ENCODE measurements at regions of chr11 and their contacts with region 1.

Region 1: DNA sequence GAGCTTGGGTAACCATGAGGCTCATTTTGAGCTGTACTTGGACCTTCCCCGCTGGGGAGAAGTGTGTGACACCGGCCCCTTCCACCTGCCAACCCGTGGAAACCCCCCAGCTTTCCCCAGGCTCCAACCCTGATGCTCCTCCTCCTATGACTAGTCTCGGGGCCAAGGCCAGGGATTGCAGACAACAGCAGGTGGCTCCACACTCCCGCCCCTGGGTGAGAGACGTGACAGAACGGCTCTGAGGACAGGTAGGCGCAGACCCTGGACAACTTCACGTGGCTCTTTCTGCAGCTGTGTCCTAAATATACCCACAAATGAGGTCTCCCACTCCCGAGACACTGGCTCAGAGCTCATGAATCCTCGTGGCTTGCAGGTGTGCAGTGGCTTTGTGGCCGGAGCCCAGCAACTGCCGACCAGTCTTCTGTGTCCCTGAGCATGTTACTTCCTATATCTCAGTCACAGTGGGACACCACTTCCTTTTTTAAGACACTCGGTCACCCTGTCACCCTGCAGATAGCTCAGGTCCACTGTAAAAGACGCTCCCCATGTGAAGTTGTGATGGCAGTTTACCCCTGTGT is 55.2 kb downstream of the NECTIN1 start:
- DNase-seq: no peak
- ATAC-seq: peak in 3 of 4 donors; percentile 57 to 78 (median 73)
- H3K4me3 ChIP-seq: no peak overlapping the region
- H3K27ac ChIP-seq: no peak overlapping the region
- H3K4me1 ChIP-seq: no peaks in the 10 kb centered on the region
- H3K27me3 ChIP-seq: no peaks in the 10 kb centered on the region
- CTCF ChIP-seq: no peak

Region 2: DNA sequence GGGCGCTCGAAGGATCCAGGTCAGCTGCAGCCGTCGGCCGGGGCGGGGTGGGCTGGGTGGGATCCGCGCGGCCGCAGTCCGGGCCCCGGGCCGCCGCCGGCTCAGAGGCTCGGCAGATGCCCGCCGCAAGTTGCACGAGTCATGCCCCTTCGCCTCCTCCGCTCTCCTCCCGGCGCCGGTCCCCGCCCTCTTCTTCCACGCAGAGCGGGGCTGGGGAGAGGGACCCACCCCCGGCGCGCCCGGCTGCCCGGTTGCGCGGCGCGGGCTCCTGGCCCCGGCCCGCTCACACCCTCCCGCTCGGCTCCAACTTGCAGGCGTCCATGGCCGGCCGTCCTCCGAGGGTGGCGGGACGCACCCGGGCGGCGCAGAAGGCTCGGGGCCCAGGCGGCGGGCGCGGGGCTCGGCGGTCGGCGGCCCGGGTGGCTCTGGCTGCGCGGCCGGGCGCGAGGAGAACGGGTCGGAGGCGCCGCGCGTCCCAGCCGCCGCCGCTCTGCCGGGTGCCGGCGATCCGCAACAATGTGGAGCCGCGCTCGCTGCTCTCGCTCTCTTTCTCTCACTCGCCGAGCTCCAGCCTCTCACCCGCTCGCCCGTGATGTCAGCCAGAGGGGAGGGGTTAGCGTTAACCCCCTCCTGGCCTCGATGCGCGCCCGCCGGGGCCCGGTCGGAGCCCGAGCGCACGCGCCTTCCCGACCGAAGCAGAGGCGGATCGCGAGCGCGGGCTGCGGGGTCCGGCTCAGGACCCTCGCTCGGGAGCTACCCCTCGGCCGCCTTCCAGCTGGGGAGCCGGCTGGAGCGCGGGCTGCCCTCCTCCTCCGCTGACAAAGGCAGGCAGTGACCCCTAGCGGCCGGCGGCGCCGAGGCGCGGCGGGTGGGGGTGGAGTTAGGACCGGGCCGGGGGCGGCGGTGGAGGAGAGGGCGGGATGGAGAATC is 55.1 kb after region 1 on chr11 and contains the start of gene NECTIN1:
- intact Hi-C with region 1: loop called in 1 of 3 experiments (anchors 5 kb)
- DNase-seq: peak; percentile 86 to 99 (median 92)
- ATAC-seq: peak; percentile 83 to 91 (median 85)
- H3K4me3 ChIP-seq: peak within 1 kb of the TSS; percentile 73 to 86 (median 80)
- H3K27ac ChIP-seq: peak within 1 kb of the TSS; percentile 66 to 85 (median 79)
- H3K4me1 ChIP-seq: peaks cover 0 to 5% (median 0%) of the 10 kb centered on the region in 3 donors
- H3K27me3 ChIP-seq: no peaks in the 10 kb centered on the region
- CTCF ChIP-seq: peak; percentile 88 to 98 (median 98)
- total RNA-seq, gene NECTIN1: 14.8 to 24.7 (median 22.2) TPM